ENCODE measurements at regions of chr9 and their contacts with region 1.

Region 1: GRCh38 chr9:110954822-110955291 is 83.4 kb downstream of the LPAR1 start:
- H3K4me3 Mint-ChIP-seq: no peak overlapping the region
- H3K27ac Mint-ChIP-seq: no peak overlapping the region
- H3K4me1 Mint-ChIP-seq: peaks cover 43% of the 10 kb centered on the region
- H3K27me3 Mint-ChIP-seq: peaks cover 86% of the 10 kb centered on the region

Region 2: DNA sequence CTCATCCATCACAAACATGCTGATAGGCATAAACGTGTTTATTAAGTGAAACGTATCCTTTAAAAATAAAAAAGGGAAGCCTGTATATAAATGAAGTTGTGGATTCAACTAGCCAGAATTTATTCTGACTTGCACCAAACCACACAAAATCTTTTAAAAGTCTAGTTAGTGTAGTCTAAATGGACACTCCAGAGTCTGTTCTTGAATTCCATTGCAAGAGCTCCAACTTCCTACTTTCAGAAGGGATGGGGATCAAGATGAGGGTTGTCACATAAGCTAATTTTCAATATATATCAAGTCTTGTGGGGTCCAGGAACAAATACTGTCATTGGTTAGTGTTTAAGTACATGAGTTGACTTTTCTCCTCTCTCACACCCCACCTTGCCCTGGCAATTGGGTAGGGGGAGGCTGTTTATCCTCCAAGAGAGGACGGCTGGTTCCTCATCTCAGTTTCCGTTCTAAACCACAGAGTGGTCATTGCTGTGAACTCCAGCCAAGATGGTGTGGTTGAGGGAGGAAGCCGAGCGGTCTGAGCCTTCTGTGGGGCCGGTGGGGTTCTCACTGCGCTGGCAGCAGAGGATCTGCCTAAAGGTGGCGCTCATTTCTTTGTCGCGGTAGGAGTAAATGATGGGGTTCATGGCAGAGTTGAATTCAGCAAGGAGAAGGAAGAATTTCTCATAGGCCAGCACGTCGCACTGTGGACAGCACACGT is 79.7 kb before region 1 on chr9:
- intact Hi-C with region 1: loop called (anchors 10 kb)
- H3K4me3 Mint-ChIP-seq: no peak overlapping the region
- H3K27ac Mint-ChIP-seq: peak overlapping the region; percentile 52
- H3K4me1 Mint-ChIP-seq: peaks cover 43% of the 10 kb centered on the region
- H3K27me3 Mint-ChIP-seq: peaks cover 17% of the 10 kb centered on the region